IMR-90 (cell line): ENCODE measurements at regions of chr1 and their contacts with region 1.

Region 1: DNA sequence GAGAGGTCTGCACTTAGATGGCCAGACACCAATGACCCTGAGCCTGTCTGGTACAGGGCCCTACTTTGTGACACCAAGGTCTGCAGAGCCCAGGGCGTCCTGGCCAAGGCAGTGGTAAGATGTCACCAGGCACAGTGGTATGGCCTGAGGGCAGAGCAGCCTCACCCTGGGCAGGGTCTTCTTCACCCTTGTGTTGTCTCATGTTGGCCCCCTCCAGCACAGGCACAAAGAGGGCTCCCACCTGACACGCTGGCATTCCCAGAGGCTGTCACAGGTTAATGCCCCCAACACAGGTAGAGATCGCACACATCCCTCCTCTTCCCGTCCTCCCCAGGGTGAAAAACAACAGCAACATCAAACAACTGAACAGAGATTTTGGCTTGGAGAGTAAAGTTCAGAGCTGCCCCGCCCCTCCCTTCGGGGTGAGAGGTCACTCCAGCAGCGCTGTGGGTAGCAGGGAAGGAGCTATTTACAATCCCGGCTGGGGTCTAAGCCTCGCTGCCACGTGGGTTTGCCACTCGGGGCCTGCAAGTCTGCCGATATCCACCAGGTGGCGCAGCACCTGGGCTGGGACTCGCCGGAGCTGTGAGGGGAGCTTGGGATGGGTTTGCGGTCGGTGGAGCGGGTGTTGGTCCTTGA is 12.6 kb downstream of the EFNA3 start:
- DNase-seq: peak; percentile 54
- ATAC-seq: peak; percentile 90
- H3K4me3 ChIP-seq: no peak overlapping the region
- H3K27ac ChIP-seq: no peak overlapping the region
- H3K4me1 ChIP-seq: peaks cover 8% of the 10 kb centered on the region; the same call in 1 of the 2 replicates
- H3K27me3 ChIP-seq: peaks cover 15% of the 10 kb centered on the region
- CTCF ChIP-seq: peak; percentile 93
- POLR2A ChIP-seq: no peak
- RAD21 ChIP-seq: peak; percentile 81

Region 2: GRCh38 chr1:155127105-155127964 is 36.1 kb after region 1 on chr1 and contains the start of gene EFNA1:
- CTCF ChIA-PET with region 1: no interaction called
- POLR2A ChIA-PET with region 1: no interaction called
- dilution Hi-C with region 1: no loop called
- in situ Hi-C with region 1: no loop called
- intact Hi-C with region 1: loop called (anchors 5 kb)
- DNase-seq: peak; percentile 57
- ATAC-seq: peak; percentile 85
- H3K4me3 ChIP-seq: peak within 1 kb of the TSS; percentile 47
- H3K27ac ChIP-seq: no peak within 1 kb of the TSS; the same call in 1 of the 2 replicates
- H3K4me1 ChIP-seq: peaks cover 22% of the 10 kb centered on the region
- H3K27me3 ChIP-seq: peaks cover 42% of the 10 kb centered on the region
- CTCF ChIP-seq: no peak
- POLR2A ChIP-seq: no peak
- RAD21 ChIP-seq: no peak
- total RNA-seq, gene EFNA1: 0.28 and 0.90 TPM in 2 replicates

Region 3: GRCh38 chr1:155167166-155168104 is 76.2 kb after region 1 on chr1:
- CTCF ChIA-PET with region 1: interaction called, 18 read pairs
- POLR2A ChIA-PET with region 1: interaction called, 5 read pairs
- dilution Hi-C with region 1: no loop called
- in situ Hi-C with region 1: loop called (anchors 5 kb)
- intact Hi-C with region 1: loop called (anchors 1 kb)
- DNase-seq: peak; percentile 72
- ATAC-seq: peak; percentile 81
- H3K4me3 ChIP-seq: no peak overlapping the region
- H3K27ac ChIP-seq: no peak overlapping the region
- H3K4me1 ChIP-seq: peaks cover 4% of the 10 kb centered on the region; the same call in 1 of the 2 replicates
- H3K27me3 ChIP-seq: peaks cover 6% of the 10 kb centered on the region; the same call in 1 of the 2 replicates
- CTCF ChIP-seq: peak; percentile 94
- POLR2A ChIP-seq: peak; percentile 39
- RAD21 ChIP-seq: peak; percentile 95